ENCODE measurements at regions of chr10 and their contacts with region 1.

Region 1: DNA sequence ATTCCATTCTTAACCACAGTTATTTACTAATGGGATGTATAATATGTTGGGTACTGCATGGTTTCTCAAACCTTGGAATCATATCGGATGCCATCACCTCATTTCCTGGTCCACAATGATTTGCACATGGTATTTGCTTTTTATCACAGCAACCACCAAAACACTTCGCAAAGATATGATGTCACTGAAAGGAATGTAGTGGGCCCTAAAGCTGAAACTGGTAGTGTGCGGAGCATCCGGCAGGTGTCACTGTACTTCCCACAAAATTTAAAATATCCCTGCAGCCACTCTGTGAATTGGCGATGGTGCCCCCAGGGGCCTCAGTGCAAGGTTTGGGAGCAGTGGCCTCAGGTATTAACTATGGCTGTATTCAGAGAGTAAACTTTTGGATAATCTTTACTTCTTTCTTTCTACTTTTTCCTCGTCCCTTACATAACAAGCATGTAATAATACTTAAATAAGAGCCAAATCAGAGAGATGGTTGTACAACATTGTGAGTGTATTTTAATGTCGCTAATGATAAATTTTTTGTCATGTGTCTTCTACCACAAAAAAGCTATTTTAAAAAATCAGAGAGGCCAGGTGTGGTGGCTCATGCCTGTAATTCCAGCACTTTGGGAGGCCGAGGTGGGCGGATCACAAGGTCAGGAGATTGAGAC is 66.2 kb downstream of the FAM241B start:
- DNase-seq: peak; percentile 93
- H3K4me3 ChIP-seq: no peak overlapping the region
- H3K27me3 ChIP-seq: peaks cover 15% of the 10 kb centered on the region
- CTCF ChIP-seq: peak; percentile 76

Region 2: DNA sequence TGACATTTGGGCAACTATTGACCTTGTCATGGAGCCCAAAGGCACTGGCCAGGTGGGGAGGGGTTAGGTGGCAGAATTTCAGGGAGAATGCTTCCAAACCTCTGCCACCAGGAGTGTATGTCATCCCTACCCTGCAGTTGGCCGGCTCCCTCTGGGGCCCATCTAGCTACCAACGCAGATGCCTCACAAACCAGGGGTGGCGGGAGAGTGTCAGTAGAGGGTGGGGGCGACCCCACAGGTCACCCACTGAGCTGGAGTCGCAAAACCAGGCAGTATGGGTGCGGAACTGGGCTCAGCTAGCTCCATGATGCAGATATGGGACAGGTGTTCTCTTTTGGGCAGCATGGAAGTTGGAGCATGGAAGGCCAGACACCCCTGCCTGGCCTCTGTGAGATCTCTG is 14.8 kb before region 1 on chr10:
- CTCF ChIA-PET with region 1: interaction called, 11 read pairs
- POLR2A ChIA-PET with region 1: no interaction called
- DNase-seq: no peak
- H3K4me3 ChIP-seq: no peak overlapping the region
- H3K27me3 ChIP-seq: peaks cover 35% of the 10 kb centered on the region
- CTCF ChIP-seq: no peak

Measured in BJ (cell line).